ENCODE measurements at regions of chr6 and their contacts with region 1.

Region 1: GRCh38 chr6:26223650-26224546 is 136.7 kb downstream of the HFE start:
- DNase-seq: peak; percentile 63 to 91
- ATAC-seq: peak; percentile 85 to 95
- H3K4me3 ChIP-seq: peak overlapping the region; percentile 60
- H3K27ac ChIP-seq: peak overlapping the region; percentile 93 to 95
- H3K4me1 ChIP-seq: peaks cover 8% of the 10 kb centered on the region; the same call in 2 of the 3 replicates
- CTCF ChIP-seq: no peak
- EP300 ChIP-seq: no peak
- POLR2A ChIP-seq: no peak
- RAD21 ChIP-seq: no peak

Region 2: DNA sequence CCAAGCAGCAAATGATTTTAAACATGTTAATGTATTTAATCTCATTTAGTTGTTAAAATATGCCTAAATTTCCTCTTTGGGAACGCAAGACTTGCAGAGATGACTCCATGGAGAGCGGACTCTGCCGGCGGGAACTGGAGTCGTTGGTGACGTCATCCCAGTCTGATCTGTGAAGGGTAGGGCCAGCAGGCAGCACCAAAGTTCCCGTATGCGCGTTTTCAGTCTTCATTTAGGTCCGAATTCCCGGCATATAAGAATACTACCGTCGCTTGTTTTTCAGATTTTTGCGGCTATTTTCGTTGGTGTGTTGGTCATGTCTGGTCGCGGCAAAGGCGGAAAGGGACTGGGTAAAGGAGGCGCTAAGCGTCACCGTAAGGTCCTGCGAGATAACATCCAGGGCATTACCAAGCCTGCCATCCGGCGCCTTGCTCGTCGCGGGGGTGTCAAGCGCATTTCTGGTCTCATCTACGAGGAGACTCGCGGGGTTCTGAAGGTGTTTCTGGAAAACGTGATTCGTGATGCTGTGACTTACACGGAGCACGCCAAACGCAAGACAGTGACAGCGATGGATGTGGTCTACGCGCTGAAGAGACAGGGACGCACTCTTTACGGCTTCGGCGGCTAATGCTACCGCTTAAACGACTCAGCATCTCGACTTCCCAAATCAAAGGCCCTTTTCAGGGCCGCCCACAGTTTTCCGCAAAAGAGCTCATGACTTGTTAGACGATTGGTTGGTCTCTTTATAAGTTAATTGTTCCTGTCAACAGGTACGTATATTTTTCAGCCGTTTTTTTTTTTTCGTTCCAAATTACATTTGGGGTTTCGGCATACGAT is 19.3 kb before region 1 on chr6:
- CTCF ChIA-PET with region 1: no interaction called
- POLR2A ChIA-PET with region 1: interaction called, 18 read pairs
- DNase-seq: peak; percentile 92 to 97
- ATAC-seq: peak; percentile 83
- H3K4me3 ChIP-seq: peak overlapping the region; percentile 81
- H3K27ac ChIP-seq: peak overlapping the region; percentile 88 to 97
- H3K4me1 ChIP-seq: peaks cover 14% of the 10 kb centered on the region; the same call in 2 of the 3 replicates
- CTCF ChIP-seq: no peak
- EP300 ChIP-seq: peak; percentile 41 to 57; a peak in 2 of 5 replicates
- POLR2A ChIP-seq: peak; percentile 95
- RAD21 ChIP-seq: no peak

Region 3: DNA sequence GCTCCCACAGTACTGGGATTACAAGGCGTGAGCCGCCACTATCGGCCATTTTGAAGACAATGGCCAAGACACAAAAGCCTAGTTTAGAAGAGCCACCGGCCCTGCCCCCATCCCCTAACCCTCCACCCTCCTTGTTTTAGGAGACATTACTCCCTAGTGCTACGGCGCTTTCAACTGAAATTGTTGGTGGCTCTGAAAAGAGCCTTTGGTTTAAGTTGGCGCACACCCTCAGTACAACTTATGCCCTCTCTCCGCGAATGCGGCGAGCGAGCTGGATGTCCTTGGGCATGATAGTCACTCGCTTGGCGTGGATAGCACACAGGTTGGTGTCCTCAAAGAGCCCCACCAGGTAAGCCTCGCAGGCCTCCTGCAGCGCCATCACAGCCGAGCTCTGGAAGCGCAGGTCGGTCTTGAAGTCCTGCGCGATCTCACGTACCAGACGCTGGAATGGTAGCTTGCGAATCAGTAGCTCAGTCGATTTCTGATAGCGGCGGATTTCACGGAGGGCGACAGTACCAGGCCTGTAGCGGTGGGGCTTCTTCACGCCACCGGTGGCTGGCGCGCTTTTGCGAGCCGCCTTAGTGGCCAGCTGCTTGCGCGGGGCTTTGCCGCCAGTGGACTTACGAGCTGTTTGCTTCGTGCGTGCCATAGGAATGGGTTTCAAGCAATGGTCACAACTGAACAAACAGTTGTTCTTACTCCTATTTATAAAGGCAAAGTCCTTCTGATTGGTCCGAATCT is 26.2 kb after region 1 on chr6:
- CTCF ChIA-PET with region 1: interaction called, 3 read pairs
- POLR2A ChIA-PET with region 1: interaction called, 13 read pairs
- DNase-seq: peak in 1 of 2 experiments; percentile 82
- ATAC-seq: peak; percentile 91 to 95
- H3K4me3 ChIP-seq: peak overlapping the region; percentile 49
- H3K27ac ChIP-seq: peak overlapping the region; percentile 84 to 91
- H3K4me1 ChIP-seq: no peaks in the 10 kb centered on the region
- CTCF ChIP-seq: no peak
- EP300 ChIP-seq: no peak
- POLR2A ChIP-seq: peak; percentile 63
- RAD21 ChIP-seq: no peak

Region 4: DNA sequence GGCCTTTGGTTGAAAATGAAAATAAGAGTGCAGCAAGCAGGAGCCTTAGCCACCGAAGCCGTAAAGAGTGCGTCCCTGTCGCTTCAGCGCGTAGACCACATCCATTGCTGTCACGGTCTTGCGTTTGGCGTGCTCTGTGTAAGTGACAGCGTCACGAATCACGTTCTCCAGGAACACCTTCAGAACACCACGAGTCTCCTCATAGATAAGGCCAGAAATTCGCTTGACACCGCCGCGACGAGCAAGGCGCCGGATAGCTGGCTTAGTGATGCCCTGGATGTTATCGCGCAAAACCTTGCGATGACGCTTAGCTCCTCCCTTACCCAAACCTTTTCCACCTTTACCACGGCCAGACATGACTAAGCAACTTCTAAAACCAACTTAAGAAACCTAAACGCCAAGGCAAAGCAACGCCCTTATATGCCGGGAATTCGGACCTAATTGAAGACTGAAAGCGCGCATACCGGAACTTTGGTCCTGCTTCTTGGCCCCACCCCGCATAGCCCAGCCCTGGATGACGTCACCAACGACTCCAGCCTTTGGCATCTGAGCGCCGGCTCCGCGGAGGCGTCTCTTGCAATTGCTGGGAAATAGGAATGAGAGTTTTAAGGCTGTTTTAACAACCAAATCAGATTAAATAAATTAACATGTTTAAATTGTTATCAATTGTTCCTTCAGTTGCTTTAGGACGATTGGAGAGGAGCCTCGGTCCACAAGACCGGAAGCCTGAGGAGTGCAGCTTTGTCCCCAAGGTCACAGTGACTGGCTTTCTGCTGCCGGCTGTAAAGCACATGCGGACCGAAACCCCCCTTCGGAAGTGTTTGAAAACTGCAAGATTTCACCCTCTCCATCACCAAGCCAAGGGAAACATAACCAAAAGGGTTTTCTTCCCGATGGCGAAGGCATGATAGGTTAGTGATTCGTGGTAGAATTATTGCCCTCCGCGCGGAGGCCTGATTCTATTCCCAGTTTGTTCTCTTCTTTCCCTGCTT is 61.5 kb after region 1 on chr6:
- CTCF ChIA-PET with region 1: no interaction called
- POLR2A ChIA-PET with region 1: interaction called, 15 read pairs
- DNase-seq: peak; percentile 65 to 99
- ATAC-seq: peak; percentile 81 to 90
- H3K4me3 ChIP-seq: peak overlapping the region; percentile 64
- H3K27ac ChIP-seq: peak overlapping the region; percentile 93 to 94
- H3K4me1 ChIP-seq: peaks cover 34% of the 10 kb centered on the region
- CTCF ChIP-seq: no peak
- EP300 ChIP-seq: peak; percentile 37 to 63; a peak in 2 of 5 replicates
- POLR2A ChIP-seq: peak; percentile 92
- RAD21 ChIP-seq: no peak